ENCODE measurements at regions of chr5 and their contacts with region 1.

Region 1: GRCh38 chr5:38441453-38442246 is 114.8 kb downstream of the LIFR start:
- DNase-seq: no peak
- H3K4me3 ChIP-seq: no peak overlapping the region
- H3K27me3 ChIP-seq: no peaks in the 10 kb centered on the region; the same call in none of the 2 replicates
- CTCF ChIP-seq: peak; percentile 96

Region 2: DNA sequence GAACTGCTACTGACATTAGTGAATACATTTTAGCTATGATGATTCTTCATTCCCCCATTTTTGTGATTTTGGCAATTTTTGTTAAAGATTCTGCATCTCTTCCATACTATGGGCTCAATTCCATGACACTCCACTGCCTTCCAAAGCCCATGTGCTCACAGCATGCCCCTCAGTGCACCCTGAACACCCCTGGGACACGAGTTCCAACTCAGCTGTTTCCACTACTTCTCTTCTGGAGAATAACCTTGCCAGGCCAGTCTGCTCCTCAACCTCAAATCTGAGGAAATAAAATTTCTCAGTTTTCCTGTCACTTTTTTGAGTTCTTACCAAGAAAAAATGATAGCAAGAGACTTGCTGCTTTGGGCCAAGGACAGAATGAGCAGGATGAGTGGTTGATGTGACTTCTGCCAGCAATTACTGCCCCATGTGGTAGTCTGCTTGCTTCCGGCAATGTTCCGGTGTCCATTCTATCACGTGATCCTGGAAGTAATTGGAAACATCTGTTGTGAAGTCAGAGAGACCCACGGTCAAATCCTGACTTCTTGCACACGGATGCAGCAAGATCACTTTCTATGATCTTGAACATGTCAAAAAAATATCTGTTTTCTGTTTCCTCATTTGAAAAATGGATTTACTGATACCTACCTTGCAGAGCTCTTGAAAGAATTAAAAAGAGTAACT is 125.0 kb before region 1 on chr5:
- CTCF ChIA-PET with region 1: no interaction called
- POLR2A ChIA-PET with region 1: no interaction called
- DNase-seq: peak; percentile 23
- H3K4me3 ChIP-seq: no peak overlapping the region
- H3K27me3 ChIP-seq: no peaks in the 10 kb centered on the region
- CTCF ChIP-seq: no peak

Region 3: GRCh38 chr5:38420691-38421390 is 20.8 kb before region 1 on chr5:
- CTCF ChIA-PET with region 1: interaction called, 40 read pairs
- POLR2A ChIA-PET with region 1: interaction called, 3 read pairs
- DNase-seq: no peak
- H3K4me3 ChIP-seq: no peak overlapping the region
- H3K27me3 ChIP-seq: peaks cover 2% of the 10 kb centered on the region
- CTCF ChIP-seq: peak; percentile 80

Region 4: GRCh38 chr5:38463634-38464521 is 22.2 kb after region 1 on chr5:
- CTCF ChIA-PET with region 1: interaction called, 19 read pairs
- POLR2A ChIA-PET with region 1: no interaction called
- DNase-seq: peak; percentile 67
- H3K4me3 ChIP-seq: no peak overlapping the region
- H3K27me3 ChIP-seq: no peaks in the 10 kb centered on the region
- CTCF ChIP-seq: no peak

Region 5: DNA sequence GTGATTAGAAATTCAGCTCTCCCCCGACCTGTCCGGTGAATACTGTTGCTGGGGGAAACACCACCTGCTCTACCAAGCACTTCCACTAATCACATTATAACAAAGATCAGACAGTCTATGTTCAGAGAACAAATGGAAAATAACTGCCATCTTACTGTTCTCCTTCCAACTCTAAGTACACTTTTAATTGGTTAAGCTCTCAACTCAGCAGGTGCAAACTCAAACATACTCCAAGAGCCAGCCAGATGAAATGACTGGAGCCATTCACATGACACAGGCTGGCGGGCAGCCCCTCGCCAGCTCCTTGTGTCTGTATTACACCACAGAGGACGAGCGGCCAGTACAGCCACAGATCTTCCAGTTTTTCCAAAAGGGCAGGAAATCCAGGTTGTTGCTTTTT is 98.7 kb after region 1 on chr5:
- CTCF ChIA-PET with region 1: interaction called, 11 read pairs
- POLR2A ChIA-PET with region 1: no interaction called
- DNase-seq: no peak
- H3K4me3 ChIP-seq: no peak overlapping the region
- H3K27me3 ChIP-seq: no peaks in the 10 kb centered on the region
- CTCF ChIP-seq: no peak

Region 6: DNA sequence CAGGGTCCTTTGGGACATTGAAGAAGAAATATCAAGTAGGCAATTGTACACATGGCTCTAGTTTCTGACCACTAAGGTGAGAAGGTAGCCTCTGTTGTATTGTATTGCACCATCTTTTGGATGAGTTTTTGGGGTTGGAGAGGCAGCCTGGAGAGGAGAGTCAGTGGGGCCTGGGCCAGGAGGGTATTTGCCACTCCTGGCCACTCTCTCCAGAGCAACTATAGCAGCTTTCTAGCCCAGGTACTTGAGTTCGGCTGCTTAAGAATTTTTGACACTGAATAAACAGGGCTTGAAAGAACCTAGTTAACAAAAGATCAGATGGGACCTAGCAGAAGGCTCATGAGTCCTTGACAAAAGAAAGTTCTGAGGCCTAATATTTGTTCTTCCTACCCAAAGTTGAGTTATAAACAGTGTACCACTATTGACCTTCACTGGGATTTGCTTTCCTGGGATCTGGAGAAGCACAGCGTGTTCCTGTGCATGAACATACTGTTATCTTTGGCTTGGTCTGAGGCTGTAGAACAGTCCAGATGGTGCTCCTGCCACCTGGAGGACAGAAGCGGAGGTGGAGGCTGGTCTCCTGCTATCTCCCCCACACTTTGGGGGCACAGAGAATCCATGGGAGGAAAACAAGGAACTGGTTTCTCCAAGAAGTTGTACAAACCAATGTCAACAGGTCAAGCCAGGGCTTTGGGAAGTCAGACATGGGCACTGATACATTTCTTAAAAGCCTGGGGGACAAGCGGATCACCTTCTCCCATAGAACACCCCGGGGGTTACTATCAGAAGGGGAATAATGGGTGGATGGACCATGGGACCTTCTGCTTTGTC is 225.2 kb after region 1 on chr5:
- CTCF ChIA-PET with region 1: interaction called, 41 read pairs
- POLR2A ChIA-PET with region 1: no interaction called
- DNase-seq: no peak
- H3K4me3 ChIP-seq: no peak overlapping the region
- H3K27me3 ChIP-seq: peaks cover 3% of the 10 kb centered on the region
- CTCF ChIP-seq: peak; percentile 63

Region 7: GRCh38 chr5:38809388-38810359 is 368.0 kb after region 1 on chr5:
- CTCF ChIA-PET with region 1: interaction called, 182 read pairs
- POLR2A ChIA-PET with region 1: no interaction called
- DNase-seq: peak; percentile 30
- H3K4me3 ChIP-seq: no peak overlapping the region
- H3K27me3 ChIP-seq: no peaks in the 10 kb centered on the region
- CTCF ChIP-seq: peak; percentile 91

Region 8: GRCh38 chr5:38871790-38872551 is 430.3 kb after region 1 on chr5:
- CTCF ChIA-PET with region 1: no interaction called
- POLR2A ChIA-PET with region 1: interaction called, 17 read pairs
- DNase-seq: peak; percentile 95
- H3K4me3 ChIP-seq: no peak overlapping the region
- H3K27me3 ChIP-seq: no peaks in the 10 kb centered on the region
- CTCF ChIP-seq: no peak

Measured in BJ (cell line).